Ascending aorta (tissue), 2 donors: ENCODE measurements at regions of chr6 and their contacts with region 1.

Region 1: DNA sequence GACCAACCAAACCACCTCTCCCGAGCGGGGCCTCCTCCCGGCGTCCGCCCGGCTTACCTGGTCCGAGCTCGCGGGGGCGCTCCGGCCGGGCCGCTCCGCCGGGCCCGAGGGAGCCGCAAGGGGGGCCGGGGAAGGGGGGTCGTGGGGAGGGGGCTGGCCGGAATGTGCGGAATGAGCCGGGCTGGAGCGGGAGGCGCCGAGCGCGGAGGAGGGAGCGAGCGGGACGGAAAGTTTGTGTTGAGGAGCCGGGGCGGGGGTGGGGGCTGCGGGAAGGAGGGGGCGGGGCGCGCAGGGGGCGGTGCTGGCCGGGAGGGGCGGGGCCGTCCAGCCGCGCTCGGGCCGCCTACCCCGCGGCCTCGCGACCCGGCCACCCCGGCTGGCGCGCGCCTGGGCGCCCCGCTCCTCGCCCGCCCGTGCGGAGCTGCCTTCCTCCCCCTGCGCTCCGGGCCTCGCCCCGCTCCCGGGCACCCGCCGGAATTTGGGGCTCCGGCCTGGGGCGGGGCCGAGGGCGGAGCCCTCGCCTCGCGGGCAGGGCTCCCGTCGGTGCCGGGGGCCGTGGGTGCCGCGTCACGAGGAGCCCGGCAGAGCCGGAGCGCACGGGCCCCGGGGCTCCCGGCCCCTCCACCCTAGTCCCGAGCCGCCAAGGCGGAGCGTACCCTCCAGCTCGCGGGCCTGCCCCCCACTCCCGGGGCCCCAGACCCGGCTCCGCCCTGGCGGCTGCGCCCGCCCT is at the start of gene TEAD3:
- DNase-seq: peak in 1 of 2 donors; percentile 80
- H3K4me3 ChIP-seq: peak within 1 kb of the TSS; percentile 96 to 98
- H3K27ac ChIP-seq: peak within 1 kb of the TSS; percentile 99 to 100
- H3K4me1 ChIP-seq: peaks cover 16 to 31% of the 10 kb centered on the region in 2 donors
- H3K27me3 ChIP-seq: no peaks in the 10 kb centered on the region
- CTCF ChIP-seq: peak in 2 of 3 experiments; percentile 18 to 37
- total RNA-seq, gene TEAD3: 19.8 TPM

Region 2: DNA sequence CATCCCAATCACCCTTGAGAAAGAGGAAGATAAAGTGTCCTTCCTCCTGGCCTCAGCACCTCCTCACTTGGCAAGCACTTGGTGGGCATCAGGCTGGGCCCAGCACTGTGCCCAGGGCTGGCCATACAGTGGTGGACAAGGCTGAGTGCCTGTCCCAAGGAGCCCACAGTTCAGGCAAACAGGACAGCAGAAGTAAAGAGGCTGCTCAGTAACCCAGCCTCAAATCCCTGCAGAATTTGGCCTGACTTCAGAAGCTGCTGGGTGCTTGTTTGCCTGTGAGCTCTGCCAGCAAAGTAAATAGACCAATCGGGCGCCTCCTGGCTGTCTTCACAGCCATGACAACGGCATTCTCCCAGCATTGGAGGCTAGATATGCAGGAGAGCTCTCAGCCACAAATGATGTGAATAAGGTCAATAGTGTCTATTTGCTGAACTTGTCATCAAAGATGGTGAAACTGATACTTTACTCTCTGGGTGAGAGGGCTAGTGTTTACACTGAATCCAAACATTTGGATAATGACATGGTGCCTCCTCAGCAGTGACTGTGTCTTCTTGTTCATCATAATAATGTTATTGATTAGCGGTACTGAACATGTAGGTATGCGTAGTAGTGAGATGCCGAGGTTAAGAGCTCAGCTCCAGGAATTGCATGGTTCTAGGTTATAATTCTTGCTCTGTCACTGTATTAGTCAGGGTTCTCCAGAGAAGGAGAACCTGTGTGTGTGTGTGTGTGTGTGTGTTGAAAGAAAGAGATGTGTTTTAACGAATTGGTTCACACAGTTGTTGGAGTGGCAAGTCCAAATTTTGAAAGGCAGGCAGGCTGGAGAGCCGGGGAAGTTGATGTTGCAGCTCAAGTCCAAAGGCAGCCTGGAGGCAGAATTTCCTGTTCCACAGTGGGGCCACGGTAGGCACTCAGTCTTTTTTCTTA is 81.7 kb before region 1 on chr6:
- intact Hi-C with region 1: no loop called
- DNase-seq: peak in 1 of 2 donors; percentile 79
- H3K4me3 ChIP-seq: no peak overlapping the region
- H3K27ac ChIP-seq: no peak overlapping the region
- H3K4me1 ChIP-seq: no peaks in the 10 kb centered on the region
- H3K27me3 ChIP-seq: no peaks in the 10 kb centered on the region
- CTCF ChIP-seq: peak; percentile 37 to 63 (median 53)

Region 3: GRCh38 chr6:35468181-35468979 is 28.6 kb before region 1 on chr6 and contains the start of gene RPL10A:
- intact Hi-C with region 1: loop called (anchors 1 kb)
- DNase-seq: peak; percentile 82 to 97
- H3K4me3 ChIP-seq: peak within 1 kb of the TSS; percentile 72 to 78
- H3K27ac ChIP-seq: peak within 1 kb of the TSS; percentile 84 to 88
- H3K4me1 ChIP-seq: peaks cover 5 to 19% of the 10 kb centered on the region in 2 donors
- H3K27me3 ChIP-seq: no peaks in the 10 kb centered on the region
- CTCF ChIP-seq: peak; percentile 97 to 98 (median 98)
- total RNA-seq, gene RPL10A: 643 TPM

Region 4: DNA sequence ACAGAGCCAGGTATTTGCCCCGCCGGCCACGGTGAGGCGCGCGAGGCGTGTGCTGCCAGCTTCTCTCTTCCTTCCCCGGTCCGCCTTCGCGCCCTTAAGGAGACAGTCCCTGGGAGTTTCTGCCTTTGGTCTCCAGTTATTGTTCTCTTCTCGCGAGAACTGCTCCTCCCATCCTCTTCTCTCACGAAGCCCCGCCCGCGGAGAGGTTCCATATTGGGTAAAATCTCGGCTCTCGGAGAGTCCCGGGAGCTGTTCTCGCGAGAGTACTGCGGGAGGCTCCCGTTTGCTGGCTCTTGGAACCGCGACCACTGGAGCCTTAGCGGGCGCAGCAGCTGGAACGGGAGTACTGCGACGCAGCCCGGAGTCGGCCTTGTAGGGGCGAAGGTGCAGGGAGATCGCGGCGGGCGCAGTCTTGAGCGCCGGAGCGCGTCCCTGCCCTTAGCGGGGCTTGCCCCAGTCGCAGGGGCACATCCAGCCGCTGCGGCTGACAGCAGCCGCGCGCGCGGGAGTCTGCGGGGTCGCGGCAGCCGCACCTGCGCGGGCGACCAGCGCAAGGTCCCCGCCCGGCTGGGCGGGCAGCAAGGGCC is 530.6 kb after region 1 on chr6 and contains the start of gene MAPK14:
- intact Hi-C with region 1: loop called (anchors 5 kb)
- DNase-seq: peak; percentile 97 to 100
- H3K4me3 ChIP-seq: peak within 1 kb of the TSS; percentile 97 to 98
- H3K27ac ChIP-seq: peak within 1 kb of the TSS; percentile 85 to 94
- H3K4me1 ChIP-seq: peaks cover 0 to 35% of the 10 kb centered on the region in 2 donors
- H3K27me3 ChIP-seq: no peaks in the 10 kb centered on the region
- CTCF ChIP-seq: peak; percentile 93 to 97 (median 93)
- total RNA-seq, gene MAPK14: 37.3 TPM